Vagina (tissue), 2 donors: ENCODE measurements at regions of chr17 and their contacts with region 1.

Region 1: DNA sequence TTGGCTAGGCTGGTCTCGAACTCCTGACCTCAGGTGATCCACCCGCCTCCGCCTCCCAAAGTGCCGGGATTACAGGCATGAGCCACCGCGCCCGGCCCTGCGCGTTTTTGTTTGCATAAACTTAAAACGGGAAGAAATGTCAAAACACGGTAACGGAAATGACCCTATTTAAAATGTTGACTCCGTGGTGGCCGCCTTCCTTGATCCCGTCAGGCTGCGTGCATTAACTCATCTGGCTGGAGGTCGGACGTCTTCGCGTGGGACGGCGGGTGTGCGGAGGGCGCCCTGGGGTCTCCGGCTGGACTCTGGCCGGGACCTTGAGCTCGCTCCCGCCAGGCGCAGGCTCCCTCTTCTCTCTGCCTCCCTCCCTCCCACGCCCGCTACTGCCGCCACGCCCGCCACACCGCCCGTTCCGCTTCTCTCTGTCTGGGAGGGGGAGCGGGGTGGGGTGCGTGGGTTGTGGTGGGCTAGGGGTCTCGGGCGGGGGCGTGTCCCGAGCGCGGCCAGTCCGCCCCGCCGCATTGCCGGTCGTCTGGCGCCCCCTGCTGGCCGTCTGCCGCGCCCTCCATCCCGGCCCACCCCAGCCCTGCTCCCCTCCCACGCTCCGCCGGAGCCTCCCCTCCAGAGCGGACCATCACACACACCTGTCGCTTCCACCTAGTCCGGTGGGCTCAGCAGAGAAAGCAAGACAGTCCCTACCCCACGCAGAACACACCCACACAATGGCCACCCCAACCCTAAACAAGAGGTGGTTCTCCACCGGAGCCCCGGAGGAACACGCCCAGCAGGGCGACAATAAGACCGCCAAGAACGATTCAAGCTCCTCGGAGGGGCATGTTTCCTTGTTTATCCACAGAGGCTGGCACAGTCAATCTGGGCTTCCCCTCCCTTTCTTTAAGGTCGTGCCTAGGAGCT is 1.2 kb upstream of the CCDC42 start:
- DNase-seq: peak in 1 of 2 donors; percentile 81
- H3K4me3 ChIP-seq: peak overlapping the region; percentile 47 to 65
- H3K27ac ChIP-seq: peak overlapping the region; percentile 18
- H3K4me1 ChIP-seq: peaks cover 4% of the 10 kb centered on the region
- H3K27me3 ChIP-seq: no peaks in the 10 kb centered on the region
- CTCF ChIP-seq: peak; percentile 44 to 99 (median 69)
- POLR2A ChIP-seq: no peak

Region 2: GRCh38 chr17:8409966-8410864 is 335.6 kb before region 1 on chr17:
- intact Hi-C with region 1: loop called (anchors 10 kb)
- DNase-seq: no peak
- H3K4me3 ChIP-seq: no peak overlapping the region
- H3K27ac ChIP-seq: no peak overlapping the region
- H3K4me1 ChIP-seq: peaks cover 9% of the 10 kb centered on the region
- H3K27me3 ChIP-seq: no peaks in the 10 kb centered on the region
- CTCF ChIP-seq: peak; percentile 56 to 90 (median 89)
- POLR2A ChIP-seq: no peak

Region 3: GRCh38 chr17:8574687-8575086 is 171.2 kb before region 1 on chr17:
- intact Hi-C with region 1: loop called (anchors 2 kb)
- DNase-seq: no peak
- H3K4me3 ChIP-seq: no peak overlapping the region
- H3K27ac ChIP-seq: no peak overlapping the region
- H3K4me1 ChIP-seq: no peaks in the 10 kb centered on the region
- H3K27me3 ChIP-seq: no peaks in the 10 kb centered on the region
- CTCF ChIP-seq: peak in 1 of 3 experiments; percentile 14
- POLR2A ChIP-seq: no peak